Activated CD4-positive, alpha-beta T cell treated with anti-CD3 and anti-CD28 coated beads for 36 hours (primary cell): ENCODE measurements at regions of chr11 and their contacts with region 1.

Region 1: DNA sequence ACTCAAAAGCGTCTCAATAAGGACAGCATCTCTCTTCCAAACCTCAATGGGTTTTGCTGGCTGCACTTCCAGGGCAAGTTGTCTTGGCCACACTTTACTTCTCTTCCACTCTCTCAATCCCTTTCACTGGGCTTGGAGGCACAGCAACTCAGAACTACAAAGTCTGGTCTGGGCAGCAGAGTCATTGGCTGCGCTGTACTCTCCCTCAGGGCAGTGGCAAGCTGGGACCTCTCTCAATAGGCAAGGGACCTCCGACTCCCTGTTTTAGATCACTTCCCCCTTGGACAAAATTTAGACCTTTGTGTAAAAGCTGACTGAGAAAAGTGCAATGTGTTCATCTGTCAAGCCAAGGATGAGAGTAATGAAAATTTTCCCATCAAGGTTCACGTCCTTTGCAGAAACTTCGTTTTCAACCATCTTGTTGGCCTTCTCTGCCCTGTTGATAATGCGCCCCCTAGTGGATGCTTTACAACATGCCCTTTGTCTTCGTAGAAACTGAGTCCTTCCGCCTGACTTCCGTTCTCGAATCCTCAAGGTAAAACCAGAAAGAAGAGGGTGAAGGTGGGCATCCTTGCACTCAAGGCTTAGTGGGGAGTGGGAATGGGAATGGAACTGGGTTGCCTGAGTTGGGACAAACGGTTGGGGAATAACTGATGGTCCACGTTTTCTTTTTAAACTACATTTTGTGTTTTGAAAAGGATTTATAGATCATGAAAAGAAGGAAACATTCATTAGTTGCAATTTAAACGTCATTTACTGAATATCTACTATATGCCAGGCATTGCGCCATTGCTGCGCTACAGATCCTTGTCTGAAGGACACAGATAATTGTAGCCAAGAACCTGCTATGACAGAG is 99.1 kb downstream of the CD44 start:
- DNase-seq: peak; percentile 78
- ATAC-seq: no peak
- H3K4me3 Mint-ChIP-seq: no peak overlapping the region
- H3K27ac Mint-ChIP-seq: peak overlapping the region; percentile 74
- H3K4me1 Mint-ChIP-seq: peaks cover 68% of the 10 kb centered on the region
- H3K27me3 Mint-ChIP-seq: no peaks in the 10 kb centered on the region

Region 2: GRCh38 chr11:34926101-34926830 is 311.8 kb before region 1 on chr11:
- CTCF ChIA-PET with region 1: interaction called, 15 read pairs
- POLR2A ChIA-PET with region 1: no interaction called
- intact Hi-C with region 1: loop called (anchors 1 kb)
- DNase-seq: peak; percentile 8
- ATAC-seq: peak; percentile 68
- H3K4me3 Mint-ChIP-seq: no peak overlapping the region
- H3K27ac Mint-ChIP-seq: no peak overlapping the region
- H3K4me1 Mint-ChIP-seq: peaks cover 20% of the 10 kb centered on the region
- H3K27me3 Mint-ChIP-seq: no peaks in the 10 kb centered on the region

Region 3: DNA sequence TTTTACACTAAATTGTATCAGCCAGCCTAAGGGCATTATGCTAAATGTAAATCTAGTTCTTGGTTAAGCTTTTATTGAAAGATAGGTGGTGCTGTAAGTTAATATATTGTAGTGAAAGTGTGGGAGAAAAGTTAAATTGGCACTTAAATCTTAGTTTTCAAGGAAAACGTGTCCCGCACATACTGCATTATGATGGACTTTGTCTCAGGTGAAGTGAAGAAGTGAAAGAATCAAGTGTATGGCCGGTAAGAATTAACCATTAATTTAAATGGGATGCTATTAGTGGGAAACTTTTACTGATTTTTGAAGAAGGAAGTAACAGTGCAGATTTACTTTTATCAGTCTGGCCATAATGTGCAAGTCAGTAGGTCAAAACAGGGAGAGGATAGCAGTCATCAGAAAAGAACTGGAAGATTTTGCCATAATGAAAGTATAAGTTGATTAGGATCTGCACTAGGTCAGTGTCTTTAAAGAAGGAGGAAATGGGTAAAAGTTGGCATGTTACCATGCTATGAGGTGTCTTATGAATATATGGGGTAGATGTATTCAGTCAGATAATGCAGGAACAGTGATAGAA is 240.0 kb before region 1 on chr11:
- CTCF ChIA-PET with region 1: interaction called, 10 read pairs
- POLR2A ChIA-PET with region 1: no interaction called
- intact Hi-C with region 1: loop called (anchors 1 kb)
- DNase-seq: no peak
- ATAC-seq: peak; percentile 39
- H3K4me3 Mint-ChIP-seq: no peak overlapping the region
- H3K27ac Mint-ChIP-seq: peak overlapping the region; percentile 11
- H3K4me1 Mint-ChIP-seq: peaks cover 30% of the 10 kb centered on the region
- H3K27me3 Mint-ChIP-seq: no peaks in the 10 kb centered on the region

Region 4: GRCh38 chr11:35138943-35139721 is 99.0 kb before region 1 on chr11 and contains the start of gene CD44:
- CTCF ChIA-PET with region 1: interaction called, 3 read pairs
- POLR2A ChIA-PET with region 1: no interaction called
- intact Hi-C with region 1: loop called (anchors 2 kb)
- DNase-seq: peak; percentile 83
- ATAC-seq: peak; percentile 67
- H3K4me3 Mint-ChIP-seq: peak within 1 kb of the TSS; percentile 83
- H3K27ac Mint-ChIP-seq: peak within 1 kb of the TSS; percentile 93
- H3K4me1 Mint-ChIP-seq: peaks cover 52% of the 10 kb centered on the region
- H3K27me3 Mint-ChIP-seq: no peaks in the 10 kb centered on the region
- total RNA-seq, gene CD44: 357 to 435 TPM

Region 5: GRCh38 chr11:35182317-35182939 is 55.7 kb before region 1 on chr11:
- CTCF ChIA-PET with region 1: interaction called, 6 read pairs
- POLR2A ChIA-PET with region 1: no interaction called
- intact Hi-C with region 1: loop called in 1 of 2 experiments (anchors 2 kb)
- DNase-seq: no peak
- ATAC-seq: peak; percentile 16
- H3K4me3 Mint-ChIP-seq: no peak overlapping the region
- H3K27ac Mint-ChIP-seq: peak overlapping the region; percentile 44
- H3K4me1 Mint-ChIP-seq: peaks cover 78% of the 10 kb centered on the region
- H3K27me3 Mint-ChIP-seq: no peaks in the 10 kb centered on the region